ENCODE measurements at regions of chr11 and their contacts with region 1.

Region 1: DNA sequence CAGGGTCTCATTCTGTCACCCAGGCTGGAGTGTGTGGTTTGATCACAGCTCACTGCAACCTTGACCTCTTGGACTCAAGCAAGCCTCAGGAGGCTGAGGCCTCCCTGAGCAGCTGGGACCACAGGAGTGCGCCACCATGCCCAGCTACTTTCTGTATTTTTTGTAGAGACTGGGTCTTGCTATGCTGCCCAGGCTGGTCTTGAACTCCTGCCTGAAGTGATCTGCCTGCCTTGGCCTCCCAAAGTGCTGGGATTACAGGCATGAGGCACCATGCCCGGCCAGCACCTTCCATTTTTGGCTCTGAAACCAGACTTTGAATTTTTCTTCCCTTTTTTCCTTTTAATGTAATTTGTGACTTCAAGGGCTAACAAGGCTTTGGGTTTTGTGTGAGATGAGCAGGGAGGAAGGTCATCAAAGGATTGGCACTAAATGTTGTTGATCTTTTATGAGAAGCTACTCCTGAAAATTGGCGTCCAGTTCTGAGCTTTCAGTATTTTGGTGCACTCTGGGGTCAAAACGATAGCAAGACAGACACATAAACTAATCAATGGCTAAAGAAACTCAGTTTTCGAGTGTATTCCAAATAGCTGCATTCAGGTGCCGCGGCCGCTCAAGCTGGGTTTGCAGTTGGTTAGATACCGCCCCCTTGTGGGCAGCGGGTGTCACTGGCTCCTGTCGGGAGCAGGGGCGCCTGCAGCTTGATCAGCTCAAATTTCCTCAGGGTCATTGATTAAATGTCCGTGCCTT is 51.9 kb upstream of the CLMP start:
- DNase-seq: peak; percentile 64 to 83 (median 69)
- H3K4me3 ChIP-seq: no peak overlapping the region
- H3K4me3 Mint-ChIP-seq: peak overlapping the region in 4 of 7 donors; percentile 23 to 49 (median 42)
- H3K27ac ChIP-seq: no peak overlapping the region
- H3K27ac Mint-ChIP-seq: peak overlapping the region in 3 of 8 donors; percentile 18 to 35 (median 35)
- H3K4me1 ChIP-seq: peaks cover 5% of the 10 kb centered on the region
- H3K4me1 Mint-ChIP-seq: peaks cover 5 to 7% (median 7%) of the 10 kb centered on the region in 3 donors
- H3K27me3 ChIP-seq: no peaks in the 10 kb centered on the region
- H3K27me3 Mint-ChIP-seq: peaks cover 6 to 26% of the 10 kb centered on the region in 2 donors

Region 2: GRCh38 chr11:123103326-123103980 is 143.5 kb before region 1 on chr11:
- CTCF ChIA-PET with region 1: interaction called, 128 read pairs
- POLR2A ChIA-PET with region 1: no interaction called
- DNase-seq: peak in 3 of 5 donors; percentile 24 to 51 (median 40)
- H3K4me3 ChIP-seq: no peak overlapping the region
- H3K4me3 Mint-ChIP-seq: no peak overlapping the region
- H3K27ac ChIP-seq: no peak overlapping the region
- H3K27ac Mint-ChIP-seq: peak overlapping the region in 3 of 8 donors; percentile 7 to 54 (median 21)
- H3K4me1 ChIP-seq: peaks cover 9% of the 10 kb centered on the region
- H3K4me1 Mint-ChIP-seq: peaks cover 11 to 17% (median 15%) of the 10 kb centered on the region in 3 donors
- H3K27me3 ChIP-seq: no peaks in the 10 kb centered on the region
- H3K27me3 Mint-ChIP-seq: peaks cover 0 to under 1% of the 10 kb centered on the region in 2 donors

Region 3: DNA sequence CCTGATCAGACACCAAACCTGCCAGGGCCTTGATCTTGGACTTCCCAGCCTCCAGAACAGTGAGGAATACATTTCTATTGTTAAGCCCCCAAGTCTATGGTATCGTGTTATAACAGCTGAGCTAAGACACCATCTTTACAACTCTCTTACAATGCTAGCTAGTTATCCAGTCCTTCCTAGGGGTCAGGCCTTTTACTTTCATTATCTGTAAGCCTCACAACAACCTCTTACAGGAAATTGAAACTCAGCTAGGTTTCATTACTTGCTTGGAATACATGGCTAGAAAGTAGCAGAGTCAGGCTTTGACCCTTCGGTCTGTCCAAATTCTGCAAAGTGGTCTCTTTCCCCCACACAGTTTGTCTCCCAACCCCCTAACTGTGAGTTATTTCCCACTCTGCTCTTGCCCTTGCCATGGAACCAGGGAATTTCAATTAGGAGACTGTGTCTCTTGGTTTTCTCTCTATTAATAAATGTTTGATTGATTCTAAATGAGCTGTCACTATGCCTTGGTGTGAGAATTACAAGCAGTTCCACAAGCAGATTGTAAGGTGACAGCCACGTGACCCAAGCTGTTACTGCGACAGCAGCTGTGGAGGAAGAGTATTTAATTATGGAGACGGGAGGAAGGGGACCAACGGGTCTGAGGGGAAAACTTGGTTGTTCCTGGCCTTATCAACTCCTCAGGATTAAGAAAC is 13.5 kb before region 1 on chr11:
- CTCF ChIA-PET with region 1: interaction called, 23 read pairs
- POLR2A ChIA-PET with region 1: no interaction called
- DNase-seq: no peak
- H3K4me3 ChIP-seq: peak overlapping the region; percentile 1
- H3K4me3 Mint-ChIP-seq: peak overlapping the region in 6 of 7 donors; percentile 65 to 81 (median 74)
- H3K27ac ChIP-seq: no peak overlapping the region
- H3K27ac Mint-ChIP-seq: peak overlapping the region; percentile 40 to 97 (median 84)
- H3K4me1 ChIP-seq: peaks cover 16% of the 10 kb centered on the region
- H3K4me1 Mint-ChIP-seq: peaks cover 16 to 18% (median 17%) of the 10 kb centered on the region in 3 donors
- H3K27me3 ChIP-seq: no peaks in the 10 kb centered on the region
- H3K27me3 Mint-ChIP-seq: no peaks in the 10 kb centered on the region

Region 4: DNA sequence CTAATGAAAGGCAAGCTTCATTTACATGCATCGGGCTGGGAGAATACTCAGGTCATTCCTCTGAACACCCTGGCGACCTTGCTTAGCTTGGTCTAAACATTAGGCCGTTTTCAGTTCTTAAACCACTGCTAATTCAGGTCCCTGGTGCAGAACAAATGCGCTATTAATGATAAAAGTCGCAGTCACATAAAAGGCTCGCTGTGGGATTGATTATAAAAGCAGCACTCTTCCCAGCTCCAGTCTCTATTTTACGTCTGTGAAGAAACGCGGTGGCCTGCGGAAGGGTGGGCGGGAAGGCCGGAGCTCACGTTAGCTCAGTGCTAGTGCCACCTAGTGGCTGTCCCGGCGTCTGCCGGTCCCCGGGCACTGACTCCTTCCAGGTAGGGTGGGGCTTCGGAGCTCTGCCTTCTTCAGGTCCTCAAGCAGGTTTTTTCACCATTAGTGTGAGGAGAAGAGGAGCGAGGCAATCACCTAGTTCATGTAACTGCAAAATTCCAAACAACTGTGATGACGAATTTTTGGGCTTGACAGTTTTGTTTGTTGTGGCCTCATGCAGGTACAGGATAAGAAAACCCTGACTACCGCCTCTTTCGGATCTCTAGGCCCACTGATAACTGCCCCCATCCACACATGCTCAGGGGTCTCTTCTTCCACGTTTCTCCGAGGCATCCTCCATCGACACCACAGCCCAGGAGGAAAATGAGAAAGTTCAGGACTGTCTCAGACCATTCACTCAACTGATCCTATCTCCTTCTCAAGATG is 14.6 kb after region 1 on chr11:
- CTCF ChIA-PET with region 1: interaction called, 19 read pairs
- POLR2A ChIA-PET with region 1: no interaction called
- DNase-seq: peak; percentile 16 to 64 (median 44)
- H3K4me3 ChIP-seq: no peak overlapping the region
- H3K4me3 Mint-ChIP-seq: peak overlapping the region in 3 of 7 donors; percentile 49 to 57 (median 51)
- H3K27ac ChIP-seq: no peak overlapping the region
- H3K27ac Mint-ChIP-seq: peak overlapping the region in 1 of 8 donors; percentile 75
- H3K4me1 ChIP-seq: no peaks in the 10 kb centered on the region
- H3K4me1 Mint-ChIP-seq: peaks cover 0 to 8% (median 7%) of the 10 kb centered on the region in 3 donors
- H3K27me3 ChIP-seq: no peaks in the 10 kb centered on the region
- H3K27me3 Mint-ChIP-seq: peaks cover 10 to 49% of the 10 kb centered on the region in 2 donors

Measured in CD8-positive, alpha-beta memory T cell (primary cell).